Transverse colon (tissue), 4 donors: ENCODE measurements at regions of chr22 and their contacts with region 1.

Region 1: DNA sequence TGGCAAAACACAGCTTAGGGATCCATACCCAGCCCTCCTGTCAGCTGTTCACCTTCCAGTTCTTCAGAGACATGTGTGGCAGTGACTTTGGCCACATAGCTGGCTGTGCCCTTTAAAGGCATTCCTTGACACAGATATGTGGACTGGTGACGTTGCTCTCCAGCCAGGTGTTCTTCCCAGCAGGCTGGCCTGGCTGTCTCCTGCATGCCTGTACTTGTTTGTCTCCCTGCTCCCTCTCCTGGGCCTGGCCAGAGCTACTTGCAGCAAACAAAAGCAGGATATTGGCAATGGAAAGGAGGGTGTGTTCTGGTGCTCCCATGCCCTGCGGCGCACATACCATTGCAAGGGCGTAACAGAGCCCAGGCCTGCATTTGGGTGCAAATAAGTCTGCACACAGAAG is 38.3 kb downstream of the PIK3IP1 start:
- DNase-seq: peak; percentile 73
- H3K4me3 ChIP-seq: no peak overlapping the region
- H3K27ac ChIP-seq: peak overlapping the region; percentile 42 to 52 (median 52)
- H3K4me1 ChIP-seq: peaks cover 0 to 52% (median 35%) of the 10 kb centered on the region in 4 donors
- H3K27me3 ChIP-seq: no peaks in the 10 kb centered on the region
- CTCF ChIP-seq: peak in 3 of 5 experiments; percentile 12 to 41 (median 17)
- EP300 ChIP-seq: no peak
- POLR2A ChIP-seq: no peak

Region 2: DNA sequence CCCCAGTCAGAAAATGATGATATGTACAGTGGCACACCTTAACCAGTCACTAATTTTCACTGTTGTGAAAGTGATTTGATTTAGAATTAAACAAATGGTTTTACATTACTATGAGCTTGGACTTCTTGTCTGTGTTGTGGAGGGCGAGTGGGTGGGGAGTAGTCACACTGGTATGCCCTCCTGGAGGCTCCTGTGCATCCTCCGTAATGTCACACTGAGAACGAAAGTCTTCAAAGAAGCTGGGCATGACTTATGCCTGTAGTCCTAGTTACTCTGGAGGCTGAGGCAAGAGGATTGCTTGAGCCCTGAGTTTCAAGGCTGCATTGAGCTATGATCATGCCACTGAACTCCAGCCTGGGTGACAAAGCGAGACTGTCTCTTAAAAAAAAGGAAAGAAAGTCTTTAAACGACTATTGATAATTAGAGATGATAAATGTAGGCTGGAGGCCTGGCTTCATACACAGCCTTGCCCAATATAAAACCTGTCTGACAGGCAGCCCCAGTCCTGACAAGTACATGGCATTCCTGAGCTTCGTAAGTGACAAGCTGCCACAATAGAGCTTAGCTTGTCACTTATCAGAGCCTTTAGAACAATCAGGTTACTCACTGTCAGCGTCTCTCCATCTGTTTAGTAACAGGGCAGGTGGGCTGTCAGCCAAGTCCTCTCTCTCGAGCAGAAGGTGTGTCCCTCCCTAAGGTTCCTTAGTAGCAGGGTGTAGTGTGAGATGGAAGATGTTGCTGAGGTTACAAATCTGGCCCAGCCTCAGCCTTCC is 46.9 kb before region 1 on chr22:
- in situ Hi-C with region 1: loop called in 1 of 4 experiments (anchors 10 kb)
- intact Hi-C with region 1: no loop called
- DNase-seq: peak; percentile 76
- H3K4me3 ChIP-seq: no peak overlapping the region
- H3K27ac ChIP-seq: peak overlapping the region in 3 of 4 donors; percentile 25 to 35 (median 34)
- H3K4me1 ChIP-seq: peaks cover 0 to 41% (median 18%) of the 10 kb centered on the region in 4 donors
- H3K27me3 ChIP-seq: no peaks in the 10 kb centered on the region
- CTCF ChIP-seq: no peak
- EP300 ChIP-seq: no peak
- POLR2A ChIP-seq: no peak

Region 3: DNA sequence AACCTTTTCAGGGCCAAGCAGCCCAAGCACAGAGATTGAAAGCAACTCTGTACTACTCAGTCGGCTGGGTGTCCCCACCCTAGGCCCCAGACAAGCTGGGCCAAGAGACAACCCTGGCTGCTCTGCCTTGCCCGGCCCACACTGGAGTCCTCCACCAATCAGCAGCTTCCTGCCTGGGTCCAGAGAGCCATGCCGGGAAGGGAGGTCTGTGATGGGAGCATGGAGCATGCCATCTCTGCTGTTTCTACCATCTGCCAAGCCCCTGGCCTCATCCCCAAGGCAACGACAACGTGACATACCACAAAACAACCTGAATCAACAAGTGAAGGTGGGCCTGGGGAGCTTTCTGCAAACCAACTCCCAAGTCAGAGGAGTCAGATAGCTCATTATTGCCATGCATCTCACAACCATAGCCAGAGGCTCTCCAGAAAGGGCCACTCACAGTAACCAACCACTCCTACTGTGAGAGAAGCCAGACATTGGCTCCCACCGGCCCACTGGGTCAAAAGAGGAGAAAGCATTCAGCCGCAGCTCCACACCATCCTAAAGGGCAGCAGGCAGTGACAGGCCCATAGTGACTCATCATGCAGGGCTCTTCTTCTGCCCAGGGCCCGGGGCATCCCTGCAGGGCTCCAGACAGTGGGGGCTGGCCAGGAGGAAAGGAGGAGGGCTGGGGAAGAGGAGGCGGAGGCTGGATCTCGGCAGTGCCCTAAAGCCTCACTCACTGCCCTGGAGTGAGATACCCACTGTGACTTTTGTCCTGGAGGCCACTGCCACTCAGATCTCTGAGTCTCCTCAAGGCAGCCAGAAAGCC is 74.1 kb after region 1 on chr22:
- in situ Hi-C with region 1: no loop called
- intact Hi-C with region 1: no loop called
- DNase-seq: no peak
- H3K4me3 ChIP-seq: no peak overlapping the region
- H3K27ac ChIP-seq: no peak overlapping the region
- H3K4me1 ChIP-seq: no peaks in the 10 kb centered on the region
- H3K27me3 ChIP-seq: no peaks in the 10 kb centered on the region
- CTCF ChIP-seq: no peak
- EP300 ChIP-seq: no peak
- POLR2A ChIP-seq: no peak